ENCODE measurements at regions of chr16 and their contacts with region 1.

Region 1: DNA sequence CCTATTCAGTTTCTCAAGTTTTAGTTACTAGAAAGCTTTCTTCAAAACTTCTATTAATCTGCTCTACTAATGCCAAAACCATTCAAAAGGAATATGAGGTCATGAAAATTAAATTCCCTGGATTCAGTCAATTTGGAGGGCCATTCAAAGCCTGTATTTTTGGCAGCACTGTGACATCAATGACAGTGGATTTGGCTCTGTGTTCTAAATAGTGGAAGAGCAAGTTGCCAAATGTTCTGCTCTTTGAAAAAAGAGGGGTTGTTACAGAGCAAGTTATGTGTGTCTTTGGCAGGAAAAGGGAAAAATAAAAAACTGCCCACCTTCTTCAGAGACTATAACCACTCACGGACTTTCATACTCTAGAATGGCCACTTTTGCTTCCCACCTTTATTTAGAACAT is 3.2 kb upstream of the C16orf46 start:
- DNase-seq: no peak
- H3K4me3 ChIP-seq: no peak overlapping the region
- H3K27me3 ChIP-seq: no peaks in the 10 kb centered on the region
- CTCF ChIP-seq: no peak

Region 2: GRCh38 chr16:81106811-81107503 is 26.7 kb after region 1 on chr16:
- CTCF ChIA-PET with region 1: no interaction called
- POLR2A ChIA-PET with region 1: interaction called, 10 read pairs
- DNase-seq: no peak
- H3K4me3 ChIP-seq: no peak overlapping the region
- H3K27me3 ChIP-seq: no peaks in the 10 kb centered on the region
- CTCF ChIP-seq: no peak